ENCODE measurements at regions of chr6 and their contacts with region 1.

Region 1: DNA sequence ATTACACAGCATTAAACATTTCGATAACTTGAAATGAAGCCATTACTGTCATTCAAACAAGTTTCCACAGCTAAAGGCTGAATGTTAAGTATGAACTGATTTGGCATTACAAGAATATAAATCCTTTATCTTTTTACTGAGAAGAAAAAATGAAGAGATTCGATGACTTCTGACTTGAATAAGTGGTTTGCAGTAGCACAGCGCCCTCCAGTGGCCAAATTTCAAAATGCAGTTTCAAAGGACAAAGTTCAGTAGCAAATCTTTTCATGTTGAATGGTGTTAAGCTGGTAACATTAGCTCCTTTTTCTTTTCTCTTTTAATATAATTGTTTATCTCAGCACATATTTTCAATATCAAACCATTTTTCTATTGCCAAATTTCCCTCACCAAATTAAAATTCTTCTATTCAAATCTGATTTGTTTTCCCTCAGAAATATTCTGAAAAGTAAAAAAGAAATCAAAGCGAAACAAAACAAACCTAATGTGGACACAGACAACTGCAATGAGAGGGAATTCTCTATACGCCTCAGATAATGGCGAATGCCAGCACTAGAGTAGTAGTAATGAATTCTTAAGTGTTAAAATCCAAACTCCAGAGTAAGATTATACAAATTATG is 145.7 kb downstream of the BTBD9 start:
- DNase-seq: peak; percentile 39 to 83 (median 56)
- ATAC-seq: peak; percentile 69
- H3K4me3 ChIP-seq: no peak overlapping the region
- H3K27ac ChIP-seq: no peak overlapping the region
- H3K4me1 ChIP-seq: no peaks in the 10 kb centered on the region
- H3K27me3 ChIP-seq: peaks cover 0 to 8% of the 10 kb centered on the region in 2 experiments; a peak in 1 of 5 replicates
- CTCF ChIP-seq: peak; percentile 69 to 97 (median 82)
- EP300 ChIP-seq: no peak
- POLR2A ChIP-seq: no peak
- RAD21 ChIP-seq: peak; percentile 94 to 96

Region 2: GRCh38 chr6:37353761-37354525 is 1140.1 kb before region 1 on chr6 and contains the start of gene RNF8:
- CTCF ChIA-PET with region 1: no interaction called
- POLR2A ChIA-PET with region 1: no interaction called
- in situ Hi-C with region 1: loop called (anchors 25 kb)
- intact Hi-C with region 1: no loop called
- DNase-seq: peak; percentile 97 to 99 (median 99)
- ATAC-seq: peak; percentile 99
- H3K4me3 ChIP-seq: peak within 1 kb of the TSS; percentile 95
- H3K27ac ChIP-seq: peak within 1 kb of the TSS; percentile 55
- H3K4me1 ChIP-seq: peaks cover 25 to 28% of the 10 kb centered on the region in 2 experiments; a peak in 4 of 5 replicates
- H3K27me3 ChIP-seq: no peaks in the 10 kb centered on the region
- CTCF ChIP-seq: no peak
- EP300 ChIP-seq: no peak
- POLR2A ChIP-seq: peak; percentile 86
- RAD21 ChIP-seq: no peak
- polyA plus RNA-seq, gene RNF8: 10.6 to 13.0 TPM

Region 3: DNA sequence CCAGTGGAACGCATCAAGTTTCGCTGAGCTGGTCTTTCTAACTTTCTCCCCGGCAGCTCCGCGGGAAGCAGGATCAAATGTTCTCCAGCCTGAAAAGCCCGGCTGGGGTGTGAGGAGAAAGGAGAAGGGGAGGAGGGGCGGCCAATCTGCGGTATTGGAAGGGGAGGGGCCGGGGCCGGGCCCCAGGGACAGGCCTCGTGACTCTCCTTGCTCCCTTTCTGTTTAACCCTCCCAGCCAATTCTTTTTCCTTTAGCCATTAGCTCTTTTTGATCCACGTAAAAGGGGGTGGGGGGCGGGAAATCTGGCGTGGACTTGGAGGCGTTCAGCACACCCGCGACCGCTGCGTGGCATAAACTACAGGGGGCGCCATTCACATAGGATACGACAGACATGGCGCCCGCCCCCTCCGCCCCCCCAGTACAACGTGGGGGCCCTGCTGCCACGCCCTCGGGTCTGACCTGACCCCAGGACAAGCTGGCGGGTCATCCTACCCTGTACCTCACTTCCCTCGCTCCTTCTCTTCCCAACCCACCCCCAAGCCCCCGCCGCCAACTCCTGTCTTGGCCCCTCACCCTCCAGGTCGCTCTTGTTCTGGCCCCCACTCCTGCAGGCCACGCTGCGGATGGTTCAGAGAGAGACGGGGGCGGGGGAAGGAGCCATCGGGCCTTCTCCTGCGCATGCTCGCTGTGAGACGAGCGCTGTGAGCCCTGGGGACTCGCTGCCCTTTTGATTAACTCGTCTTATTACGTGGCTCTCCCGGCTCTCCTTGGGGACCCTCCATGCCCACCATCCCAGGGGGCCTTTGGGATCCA is 788.6 kb before region 1 on chr6:
- CTCF ChIA-PET with region 1: interaction called, 3 read pairs
- POLR2A ChIA-PET with region 1: no interaction called
- in situ Hi-C with region 1: loop called (anchors 25 kb)
- intact Hi-C with region 1: loop called (anchors 5 kb)
- DNase-seq: peak; percentile 87 to 90 (median 88)
- ATAC-seq: peak; percentile 91
- H3K4me3 ChIP-seq: peak overlapping the region; percentile 36
- H3K27ac ChIP-seq: no peak overlapping the region
- H3K4me1 ChIP-seq: peaks cover 8 to 16% of the 10 kb centered on the region in 2 experiments; a peak in 4 of 5 replicates
- H3K27me3 ChIP-seq: peaks cover 4 to 12% of the 10 kb centered on the region in 2 experiments; a peak in 3 of 5 replicates
- CTCF ChIP-seq: peak; percentile 70 to 79 (median 76)
- EP300 ChIP-seq: no peak; the same call in 1 of the 2 replicates
- POLR2A ChIP-seq: no peak
- RAD21 ChIP-seq: peak; percentile 60 to 80

Region 4: GRCh38 chr6:38027685-38028373 is 466.2 kb before region 1 on chr6:
- CTCF ChIA-PET with region 1: no interaction called
- POLR2A ChIA-PET with region 1: no interaction called
- in situ Hi-C with region 1: no loop called
- intact Hi-C with region 1: loop called (anchors 10 kb)
- DNase-seq: peak in 1 of 4 experiments; percentile 6
- ATAC-seq: no peak
- H3K4me3 ChIP-seq: no peak overlapping the region
- H3K27ac ChIP-seq: no peak overlapping the region
- H3K4me1 ChIP-seq: no peaks in the 10 kb centered on the region
- H3K27me3 ChIP-seq: no peaks in the 10 kb centered on the region
- CTCF ChIP-seq: no peak
- EP300 ChIP-seq: no peak
- POLR2A ChIP-seq: no peak
- RAD21 ChIP-seq: no peak

Region 5: DNA sequence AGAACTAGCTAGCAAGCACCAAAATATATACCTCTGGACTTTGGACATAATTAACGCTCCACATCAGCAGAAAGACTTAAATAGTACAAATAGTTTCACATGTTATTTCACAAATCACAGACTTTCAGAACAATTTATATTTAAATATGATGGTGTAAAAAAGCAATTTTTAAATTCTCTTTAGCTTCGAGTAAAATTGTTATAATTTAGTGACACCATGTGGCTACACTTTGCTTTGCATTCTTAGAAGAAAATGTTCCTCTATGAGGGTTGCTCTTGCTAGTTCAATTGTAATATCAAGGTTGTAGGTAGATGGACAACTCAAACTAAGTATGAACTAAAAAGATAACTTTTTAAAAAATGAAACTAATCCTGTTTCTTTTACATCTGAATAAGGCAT is 76.7 kb after region 1 on chr6:
- CTCF ChIA-PET with region 1: no interaction called
- POLR2A ChIA-PET with region 1: no interaction called
- in situ Hi-C with region 1: no loop called
- intact Hi-C with region 1: loop called (anchors 5 kb)
- DNase-seq: peak in 1 of 4 experiments; percentile 21
- ATAC-seq: peak; percentile 64; the same call in 1 of the 3 replicates
- H3K4me3 ChIP-seq: no peak overlapping the region
- H3K27ac ChIP-seq: no peak overlapping the region
- H3K4me1 ChIP-seq: peaks cover 0 to 16% of the 10 kb centered on the region in 2 experiments; a peak in 3 of 5 replicates
- H3K27me3 ChIP-seq: no peaks in the 10 kb centered on the region
- CTCF ChIP-seq: peak; percentile 25 to 60 (median 34); a peak in 3 of 6 replicates
- EP300 ChIP-seq: no peak
- POLR2A ChIP-seq: no peak
- RAD21 ChIP-seq: peak; percentile 48 to 73

Region 6: DNA sequence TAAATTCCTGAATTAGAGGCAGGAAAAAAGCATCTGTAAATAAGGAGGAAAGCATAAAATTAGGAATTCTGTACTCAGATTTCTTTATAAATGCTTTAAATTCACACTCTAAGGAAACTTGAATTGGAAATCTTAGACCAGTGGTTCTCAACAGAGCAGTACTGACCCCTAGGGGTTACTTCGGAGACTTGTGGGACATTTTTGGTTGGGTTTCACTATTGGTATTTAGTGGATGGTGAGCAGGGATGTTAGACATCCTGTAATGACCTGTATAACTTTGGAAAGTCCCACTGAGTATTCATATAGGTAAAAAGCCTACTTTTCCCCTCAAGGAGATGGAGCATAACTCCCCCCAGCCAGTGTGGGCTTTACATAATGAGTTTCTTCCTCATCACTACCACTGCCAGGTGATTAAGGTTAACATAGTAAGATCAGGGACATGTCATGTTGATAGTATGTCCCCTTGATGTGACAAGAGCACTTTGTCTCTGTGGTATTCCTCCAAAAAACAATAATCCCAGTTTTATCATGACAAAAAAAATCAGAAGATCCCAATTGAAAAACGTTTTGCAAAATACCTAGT is 177.9 kb after region 1 on chr6:
- CTCF ChIA-PET with region 1: interaction called, 3 read pairs
- POLR2A ChIA-PET with region 1: no interaction called
- in situ Hi-C with region 1: no loop called
- intact Hi-C with region 1: loop called (anchors 5 kb)
- DNase-seq: peak; percentile 62 to 76 (median 66)
- ATAC-seq: peak; percentile 91
- H3K4me3 ChIP-seq: no peak overlapping the region
- H3K27ac ChIP-seq: no peak overlapping the region
- H3K4me1 ChIP-seq: no peaks in the 10 kb centered on the region
- H3K27me3 ChIP-seq: 0 out of 5 replicates have a peak, but pooled peaks cover 0 to 4% of the 10 kb centered on the region in 2 experiments
- CTCF ChIP-seq: peak; percentile 66 to 89 (median 79)
- EP300 ChIP-seq: no peak
- POLR2A ChIP-seq: no peak
- RAD21 ChIP-seq: peak; percentile 78 to 83

Region 7: GRCh38 chr6:38688579-38689087 is 194.6 kb after region 1 on chr6:
- CTCF ChIA-PET with region 1: no interaction called
- POLR2A ChIA-PET with region 1: no interaction called
- in situ Hi-C with region 1: no loop called
- intact Hi-C with region 1: no loop called
- DNase-seq: no peak
- ATAC-seq: peak; percentile 73
- H3K4me3 ChIP-seq: no peak overlapping the region
- H3K27ac ChIP-seq: no peak overlapping the region
- H3K4me1 ChIP-seq: no peaks in the 10 kb centered on the region
- H3K27me3 ChIP-seq: no peaks in the 10 kb centered on the region
- CTCF ChIP-seq: no peak
- EP300 ChIP-seq: no peak
- POLR2A ChIP-seq: no peak
- RAD21 ChIP-seq: no peak